B cell (primary cell): ENCODE measurements at regions of chr15 and their contacts with region 1.

Region 1: GRCh38 chr15:73265536-73266153 is 103.1 kb downstream of the HCN4 start:
- DNase-seq: peak; percentile 48
- ATAC-seq: peak; percentile 43
- H3K4me3 ChIP-seq: no peak overlapping the region
- H3K4me3 Mint-ChIP-seq: no peak overlapping the region
- H3K27ac ChIP-seq: no peak overlapping the region
- H3K27ac Mint-ChIP-seq: no peak overlapping the region
- H3K4me1 ChIP-seq: no peaks in the 10 kb centered on the region
- H3K4me1 Mint-ChIP-seq: no peaks in the 10 kb centered on the region
- H3K27me3 ChIP-seq: no peaks in the 10 kb centered on the region
- H3K27me3 Mint-ChIP-seq: peaks cover 9% of the 10 kb centered on the region
- CTCF ChIP-seq: peak; percentile 82

Region 2: DNA sequence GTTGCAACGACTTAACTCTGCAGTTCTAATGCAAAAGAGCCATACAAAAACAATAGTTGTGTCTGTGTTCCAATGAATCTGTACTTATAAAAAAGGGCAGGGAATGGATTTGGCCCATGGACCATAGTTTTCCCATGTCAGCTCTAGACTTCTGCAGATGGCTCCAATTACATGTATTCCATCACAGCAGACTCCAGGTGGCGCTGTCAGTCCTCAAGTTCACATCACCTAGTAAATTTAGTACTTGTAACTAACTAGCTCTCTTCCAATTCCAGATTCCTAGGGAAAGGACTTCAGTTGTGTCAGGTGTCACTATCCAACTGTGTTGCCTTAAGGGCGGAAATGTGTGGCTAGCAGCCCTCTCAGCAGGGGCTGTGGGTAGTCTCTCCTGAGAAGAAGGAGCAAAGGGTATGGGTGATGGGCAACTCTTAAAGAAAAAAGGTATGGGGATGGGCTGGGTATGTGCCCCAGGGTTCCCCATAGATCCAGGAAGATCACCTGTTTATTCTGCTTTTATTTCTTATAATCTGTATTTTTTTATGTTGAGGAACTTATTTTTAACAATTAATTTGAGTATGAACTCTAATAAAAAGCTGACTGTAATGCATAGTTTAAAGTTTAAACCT is 543.5 kb before region 1 on chr15:
- CTCF ChIA-PET with region 1: interaction called, 15 read pairs
- POLR2A ChIA-PET with region 1: no interaction called
- intact Hi-C with region 1: no loop called
- DNase-seq: peak; percentile 68
- ATAC-seq: no peak
- H3K4me3 ChIP-seq: no peak overlapping the region
- H3K4me3 Mint-ChIP-seq: no peak overlapping the region
- H3K27ac ChIP-seq: no peak overlapping the region
- H3K27ac Mint-ChIP-seq: no peak overlapping the region
- H3K4me1 ChIP-seq: no peaks in the 10 kb centered on the region
- H3K4me1 Mint-ChIP-seq: no peaks in the 10 kb centered on the region
- H3K27me3 ChIP-seq: no peaks in the 10 kb centered on the region
- H3K27me3 Mint-ChIP-seq: no peaks in the 10 kb centered on the region
- CTCF ChIP-seq: peak; percentile 88

Region 3: GRCh38 chr15:72902245-72902918 is 363.3 kb before region 1 on chr15:
- CTCF ChIA-PET with region 1: no interaction called
- POLR2A ChIA-PET with region 1: no interaction called
- intact Hi-C with region 1: no loop called
- DNase-seq: no peak
- ATAC-seq: no peak
- H3K4me3 ChIP-seq: no peak overlapping the region
- H3K4me3 Mint-ChIP-seq: no peak overlapping the region
- H3K27ac ChIP-seq: no peak overlapping the region
- H3K27ac Mint-ChIP-seq: no peak overlapping the region
- H3K4me1 ChIP-seq: no peaks in the 10 kb centered on the region
- H3K4me1 Mint-ChIP-seq: no peaks in the 10 kb centered on the region
- H3K27me3 ChIP-seq: peaks cover 0 to 9% (median 4%) of the 10 kb centered on the region in 4 experiments
- H3K27me3 Mint-ChIP-seq: peaks cover 52% of the 10 kb centered on the region
- CTCF ChIP-seq: no peak

Region 4: GRCh38 chr15:73051811-73052678 is 213.6 kb before region 1 on chr15 and contains the start of gene NEO1:
- CTCF ChIA-PET with region 1: no interaction called
- POLR2A ChIA-PET with region 1: no interaction called
- intact Hi-C with region 1: loop called (anchors 2 kb)
- DNase-seq: peak; percentile 84
- ATAC-seq: peak; percentile 76
- H3K4me3 ChIP-seq: peak within 1 kb of the TSS in 4 of 5 experiments; percentile 55 to 78 (median 68)
- H3K4me3 Mint-ChIP-seq: peak within 1 kb of the TSS; percentile 81
- H3K27ac ChIP-seq: no peak within 1 kb of the TSS
- H3K27ac Mint-ChIP-seq: peak within 1 kb of the TSS; percentile 64
- H3K4me1 ChIP-seq: peaks cover 8 to 11% of the 10 kb centered on the region in 2 donors
- H3K4me1 Mint-ChIP-seq: peaks cover 10% of the 10 kb centered on the region
- H3K27me3 ChIP-seq: peaks cover 0 to 32% (median 24%) of the 10 kb centered on the region in 4 experiments
- H3K27me3 Mint-ChIP-seq: peaks cover 37% of the 10 kb centered on the region
- CTCF ChIP-seq: no peak
- total RNA-seq, gene NEO1: 3.9 and 5.6 TPM in 2 replicates

Region 5: DNA sequence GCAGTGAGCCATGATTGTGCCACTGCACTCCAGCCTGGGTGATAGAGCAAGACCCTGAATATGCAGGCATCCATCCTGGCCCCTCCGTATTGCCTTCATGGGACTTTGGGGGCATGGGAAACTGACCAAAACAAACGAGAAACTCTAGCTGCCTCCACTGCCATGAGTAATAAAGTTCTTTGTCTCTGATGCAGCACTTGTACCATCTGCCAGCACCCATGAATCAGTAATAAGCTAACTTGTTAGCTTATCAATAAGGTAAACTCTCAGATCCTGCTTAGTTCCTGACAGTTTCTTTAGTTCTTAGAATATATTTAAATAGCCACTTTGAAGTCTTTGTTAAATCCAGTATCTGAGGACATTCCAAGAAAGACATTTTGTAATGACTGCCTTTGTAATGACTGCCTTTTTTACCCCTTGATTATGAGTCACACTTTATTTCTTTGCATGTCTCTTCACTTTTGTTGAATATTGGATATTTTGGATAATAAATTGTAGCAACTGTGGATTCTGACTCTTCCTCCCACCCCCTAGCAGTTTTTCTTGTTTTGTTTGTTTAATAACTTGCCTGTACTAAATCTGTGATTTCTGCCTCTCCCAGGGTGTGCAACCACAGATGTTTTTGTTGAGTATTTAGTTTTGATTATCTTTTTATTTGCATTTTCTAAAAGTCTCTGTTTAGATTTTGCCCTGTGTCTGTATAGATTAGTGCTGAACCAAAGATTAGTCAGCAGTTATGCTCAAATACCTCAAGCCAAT is 33.8 kb before region 1 on chr15:
- CTCF ChIA-PET with region 1: interaction called, 13 read pairs
- POLR2A ChIA-PET with region 1: no interaction called
- intact Hi-C with region 1: no loop called
- DNase-seq: no peak
- ATAC-seq: no peak
- H3K4me3 ChIP-seq: no peak overlapping the region
- H3K4me3 Mint-ChIP-seq: no peak overlapping the region
- H3K27ac ChIP-seq: no peak overlapping the region
- H3K27ac Mint-ChIP-seq: no peak overlapping the region
- H3K4me1 ChIP-seq: no peaks in the 10 kb centered on the region
- H3K4me1 Mint-ChIP-seq: no peaks in the 10 kb centered on the region
- H3K27me3 ChIP-seq: peaks cover 0 to 4% (median 2%) of the 10 kb centered on the region in 4 experiments
- H3K27me3 Mint-ChIP-seq: peaks cover 9% of the 10 kb centered on the region
- CTCF ChIP-seq: no peak

Region 6: DNA sequence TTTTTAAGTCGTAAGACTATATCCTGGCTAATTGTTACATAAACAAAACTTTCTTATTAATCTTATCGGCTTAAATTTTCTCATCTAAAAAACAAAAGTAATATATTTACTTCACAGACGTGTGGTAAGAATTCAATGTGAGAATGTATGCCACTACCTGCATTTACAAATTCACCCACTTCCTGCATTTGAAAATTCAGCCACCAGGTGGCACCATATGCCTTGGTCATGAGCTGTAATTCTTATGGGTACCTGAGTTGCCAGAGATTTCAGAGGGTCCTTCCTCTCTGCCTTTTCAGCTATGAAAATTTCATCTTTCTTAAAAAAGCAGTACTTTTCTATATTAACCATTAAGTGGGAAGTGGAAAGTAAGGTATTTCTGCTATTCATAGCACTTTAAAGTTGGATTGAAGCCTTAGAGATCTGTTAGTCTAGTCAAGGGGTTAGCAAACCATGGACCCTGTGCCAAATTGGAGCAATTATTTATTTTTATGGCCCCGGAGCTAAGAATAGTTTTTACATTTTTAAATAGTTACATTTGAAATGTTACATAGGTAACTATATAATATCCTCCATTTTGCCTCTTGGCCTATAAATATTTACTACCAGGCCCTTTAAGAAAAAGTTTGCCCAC is 24.7 kb before region 1 on chr15:
- CTCF ChIA-PET with region 1: interaction called, 26 read pairs
- POLR2A ChIA-PET with region 1: no interaction called
- intact Hi-C with region 1: no loop called
- DNase-seq: peak; percentile 72
- ATAC-seq: peak; percentile 36
- H3K4me3 ChIP-seq: no peak overlapping the region
- H3K4me3 Mint-ChIP-seq: no peak overlapping the region
- H3K27ac ChIP-seq: no peak overlapping the region
- H3K27ac Mint-ChIP-seq: no peak overlapping the region
- H3K4me1 ChIP-seq: no peaks in the 10 kb centered on the region
- H3K4me1 Mint-ChIP-seq: no peaks in the 10 kb centered on the region
- H3K27me3 ChIP-seq: no peaks in the 10 kb centered on the region
- H3K27me3 Mint-ChIP-seq: peaks cover 22% of the 10 kb centered on the region
- CTCF ChIP-seq: peak; percentile 94

Region 7: DNA sequence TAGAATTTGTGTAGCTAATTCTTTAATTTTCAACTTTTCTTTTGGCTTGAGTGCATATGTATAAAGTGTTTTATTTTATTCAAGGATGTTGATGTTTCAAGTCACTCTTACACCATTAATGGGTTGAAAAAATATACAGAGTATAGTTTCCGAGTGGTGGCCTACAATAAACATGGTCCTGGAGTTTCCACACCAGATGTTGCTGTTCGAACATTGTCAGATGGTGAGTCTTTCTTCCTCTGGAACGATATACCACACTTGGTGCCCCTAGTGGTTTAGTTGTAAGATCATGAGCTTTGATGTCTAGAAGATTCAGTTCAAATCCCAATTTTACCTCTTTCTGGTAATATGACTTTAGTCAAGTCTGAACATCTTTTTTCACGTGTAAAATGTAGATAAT is 16.1 kb before region 1 on chr15:
- CTCF ChIA-PET with region 1: interaction called, 20 read pairs
- POLR2A ChIA-PET with region 1: no interaction called
- intact Hi-C with region 1: no loop called
- DNase-seq: no peak
- ATAC-seq: no peak
- H3K4me3 ChIP-seq: no peak overlapping the region
- H3K4me3 Mint-ChIP-seq: no peak overlapping the region
- H3K27ac ChIP-seq: no peak overlapping the region
- H3K27ac Mint-ChIP-seq: no peak overlapping the region
- H3K4me1 ChIP-seq: no peaks in the 10 kb centered on the region
- H3K4me1 Mint-ChIP-seq: no peaks in the 10 kb centered on the region
- H3K27me3 ChIP-seq: peaks cover 0 to 3% (median 0%) of the 10 kb centered on the region in 4 experiments
- H3K27me3 Mint-ChIP-seq: peaks cover 19% of the 10 kb centered on the region
- CTCF ChIP-seq: no peak

Region 8: DNA sequence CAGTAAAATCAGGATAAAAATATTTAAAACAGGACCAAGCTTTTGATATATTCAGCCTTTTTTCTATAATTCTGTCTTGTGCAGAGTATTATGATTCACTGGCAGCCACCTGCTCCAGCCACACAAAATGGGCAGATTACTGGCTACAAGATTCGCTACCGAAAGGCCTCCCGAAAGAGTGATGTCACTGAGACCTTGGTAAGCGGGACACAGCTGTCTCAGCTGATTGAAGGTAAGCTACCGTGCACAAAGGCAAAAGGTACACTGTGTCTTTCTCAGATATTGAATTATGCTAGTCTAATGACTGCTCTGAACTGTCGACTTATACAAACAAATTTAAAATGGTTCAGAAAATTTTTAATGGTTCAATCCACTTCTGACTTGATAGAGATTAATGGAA is 11.0 kb before region 1 on chr15:
- CTCF ChIA-PET with region 1: interaction called, 20 read pairs
- POLR2A ChIA-PET with region 1: no interaction called
- intact Hi-C with region 1: no loop called
- DNase-seq: no peak
- ATAC-seq: no peak
- H3K4me3 ChIP-seq: no peak overlapping the region
- H3K4me3 Mint-ChIP-seq: no peak overlapping the region
- H3K27ac ChIP-seq: no peak overlapping the region
- H3K27ac Mint-ChIP-seq: no peak overlapping the region
- H3K4me1 ChIP-seq: no peaks in the 10 kb centered on the region
- H3K4me1 Mint-ChIP-seq: no peaks in the 10 kb centered on the region
- H3K27me3 ChIP-seq: peaks cover 0 to 3% (median 0%) of the 10 kb centered on the region in 4 experiments
- H3K27me3 Mint-ChIP-seq: peaks cover 10% of the 10 kb centered on the region
- CTCF ChIP-seq: no peak